ENCODE measurements at regions of chr7 and their contacts with region 1.

Region 1: DNA sequence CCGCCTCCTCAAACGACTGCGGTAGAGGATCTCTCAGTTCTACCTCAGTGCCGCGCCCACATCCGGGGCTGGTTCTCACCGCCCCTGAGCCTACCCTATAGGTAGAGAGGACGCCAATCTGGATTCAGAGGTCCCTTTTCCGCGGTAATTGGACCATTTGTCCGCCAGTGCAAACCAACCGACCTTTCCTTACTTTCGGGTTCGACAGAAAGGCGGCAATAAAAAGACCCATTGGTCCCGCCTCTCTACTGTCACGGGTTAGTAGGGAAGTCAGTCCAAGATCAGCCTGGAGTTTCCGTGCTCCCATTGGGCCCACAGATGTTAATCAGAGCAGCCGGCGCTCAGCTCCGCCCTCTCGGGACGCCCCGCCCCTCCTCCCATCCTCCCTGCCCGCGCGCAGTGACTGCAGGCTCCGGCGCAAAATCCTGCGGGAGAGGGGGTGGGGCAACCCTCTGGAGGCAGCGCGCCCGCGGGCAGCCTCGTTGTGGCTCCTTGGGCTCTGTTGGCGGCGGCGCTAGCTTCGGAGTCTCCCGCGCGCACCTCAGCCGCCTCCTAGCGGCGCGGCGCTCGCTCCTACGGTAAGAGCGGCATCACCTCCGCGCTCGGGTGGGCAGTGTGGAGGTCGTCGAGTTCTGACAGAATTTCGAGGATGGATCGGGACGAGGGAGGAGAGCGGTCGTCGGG is at the starts of genes PHTF2 and TMEM60:
- DNase-seq: peak; percentile 98 to 99 (median 98)
- H3K4me3 ChIP-seq: peak within 1 kb of the TSS; percentile 90
- H3K27ac ChIP-seq: peak within 1 kb of the TSS; percentile 77 to 85
- H3K4me1 ChIP-seq: peaks cover 9% of the 10 kb centered on the region
- H3K27me3 ChIP-seq: no peaks in the 10 kb centered on the region
- CTCF ChIP-seq: peak in 2 of 3 donors; percentile 58 to 70
- EP300 ChIP-seq: no peak
- POLR2A ChIP-seq: peak; percentile 58
- total RNA-seq, gene PHTF2: 11.4 to 22.2 (median 14.6) TPM
- total RNA-seq, gene TMEM60: 8.1 to 15.7 (median 12.3) TPM

Region 2: DNA sequence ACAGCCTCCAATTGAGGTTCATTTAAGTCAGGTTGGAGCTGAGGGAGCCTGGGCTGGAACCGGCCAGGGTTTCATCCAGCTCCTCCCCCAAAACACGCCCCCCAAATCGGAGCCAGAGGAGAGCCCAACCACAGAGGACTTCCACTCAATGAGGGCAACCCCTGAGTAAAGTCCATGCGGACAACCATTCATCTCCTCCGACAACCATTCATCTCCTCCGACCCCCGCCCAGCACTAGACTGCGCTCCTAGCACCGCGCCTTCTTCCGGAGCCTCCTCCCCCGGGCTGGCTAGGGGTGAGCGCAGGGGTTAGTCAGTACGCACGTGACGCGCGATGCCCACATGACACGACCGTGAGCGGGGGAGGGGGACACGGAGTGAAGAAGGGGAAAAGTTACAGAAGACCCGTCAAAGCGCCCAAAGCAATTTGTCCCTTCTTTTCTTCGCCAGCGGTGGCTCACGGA is 1653.5 kb after region 1 on chr7:
- intact Hi-C with region 1: loop called in 1 of 4 experiments (anchors 10 kb)
- DNase-seq: peak; percentile 89 to 92 (median 90)
- H3K4me3 ChIP-seq: peak overlapping the region; percentile 72
- H3K27ac ChIP-seq: peak overlapping the region; percentile 93 to 98
- H3K4me1 ChIP-seq: peaks cover 3% of the 10 kb centered on the region
- H3K27me3 ChIP-seq: no peaks in the 10 kb centered on the region
- CTCF ChIP-seq: no peak
- EP300 ChIP-seq: peak; percentile 70
- POLR2A ChIP-seq: peak; percentile 83